ENCODE measurements at regions of chr2 and their contacts with region 1.

Region 1: DNA sequence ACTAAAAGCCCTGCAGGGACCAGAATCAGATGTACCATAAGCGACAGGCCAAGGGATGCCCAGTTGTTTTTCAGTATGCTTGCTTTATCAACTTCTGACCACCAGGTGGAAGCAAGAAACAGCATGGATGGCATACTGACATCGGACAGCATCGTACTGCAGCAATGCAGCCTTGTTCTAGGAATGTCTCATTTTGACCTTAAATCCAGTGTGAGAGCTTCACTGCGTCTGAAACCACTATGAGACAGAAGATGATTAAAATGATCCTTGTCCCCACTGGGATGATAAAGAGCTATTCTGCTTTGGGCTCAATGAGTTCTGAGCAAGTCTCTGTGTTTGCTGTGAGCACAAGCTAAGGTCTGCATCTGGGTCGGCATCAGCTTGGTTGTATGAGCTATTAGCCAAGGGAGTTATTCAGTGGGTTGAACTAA is 54.3 kb downstream of the CDK15 start:
- DNase-seq: peak in 1 of 2 donors; percentile 49
- ATAC-seq: peak; percentile 73 to 92 (median 88)
- H3K4me3 ChIP-seq: no peak overlapping the region
- H3K27ac ChIP-seq: no peak overlapping the region
- H3K4me1 ChIP-seq: peaks cover 0 to 6% (median 4%) of the 10 kb centered on the region in 9 donors
- H3K27me3 ChIP-seq: peaks cover 0 to 34% (median 17%) of the 10 kb centered on the region in 7 donors
- CTCF ChIP-seq: peak; percentile 50 to 89 (median 84)

Region 2: GRCh38 chr2:200635251-200635650 is 1225.4 kb before region 1 on chr2:
- intact Hi-C with region 1: no loop called
- DNase-seq: no peak
- ATAC-seq: peak in 1 of 8 donors; percentile 63
- H3K4me3 ChIP-seq: no peak overlapping the region
- H3K27ac ChIP-seq: peak overlapping the region in 1 of 10 donors; percentile 65
- H3K4me1 ChIP-seq: peaks cover 0 to 17% (median 0%) of the 10 kb centered on the region in 9 donors
- H3K27me3 ChIP-seq: no peaks in the 10 kb centered on the region
- CTCF ChIP-seq: no peak

Region 3: GRCh38 chr2:201680743-201681142 is 179.9 kb before region 1 on chr2:
- intact Hi-C with region 1: no loop called
- DNase-seq: no peak
- ATAC-seq: no peak
- H3K4me3 ChIP-seq: no peak overlapping the region
- H3K27ac ChIP-seq: no peak overlapping the region
- H3K4me1 ChIP-seq: no peaks in the 10 kb centered on the region
- H3K27me3 ChIP-seq: no peaks in the 10 kb centered on the region
- CTCF ChIP-seq: peak in 7 of 9 donors; percentile 18 to 48 (median 26)

Region 4: DNA sequence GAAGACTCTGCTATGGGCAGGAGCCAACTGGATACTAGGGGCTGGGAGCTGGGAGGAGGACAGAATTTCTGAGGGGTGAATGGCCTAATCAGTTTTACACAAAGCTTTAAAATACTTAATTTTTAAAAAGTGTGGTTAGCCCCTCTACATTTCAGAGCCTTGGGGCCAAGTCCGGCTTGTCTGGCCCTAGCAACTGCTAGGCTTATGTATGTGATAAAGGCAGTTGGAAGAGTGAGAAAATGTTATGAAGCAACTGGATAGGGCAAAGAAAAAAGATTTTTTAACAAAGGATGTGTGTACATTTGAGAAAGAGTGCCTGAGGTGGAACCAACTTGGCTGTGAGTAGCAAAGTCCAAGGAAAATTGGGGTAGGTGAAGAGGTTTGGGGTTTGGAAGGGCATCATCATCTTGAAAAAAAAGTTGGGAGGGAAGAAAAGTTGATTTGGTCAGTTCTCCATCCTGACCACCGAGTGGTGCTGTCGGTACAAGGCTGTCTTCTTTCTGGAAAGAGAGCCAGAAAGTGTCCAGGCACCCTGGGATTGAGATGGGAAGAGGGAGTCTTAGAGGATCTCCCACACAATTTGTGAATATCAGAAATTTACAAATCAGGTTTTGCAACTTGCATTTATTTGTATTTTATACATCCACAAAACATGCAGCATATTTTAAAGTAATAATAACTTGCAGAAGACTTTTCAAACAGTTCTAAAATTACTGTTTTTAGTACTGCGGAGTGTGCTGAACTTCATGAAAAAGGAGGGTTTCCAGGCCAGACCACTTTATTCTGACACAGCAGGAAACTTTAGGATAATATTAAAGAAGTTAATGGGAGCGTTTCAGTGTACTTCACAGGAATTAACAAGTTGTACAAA is 64.8 kb before region 1 on chr2:
- intact Hi-C with region 1: loop called in 1 of 10 experiments (anchors 10 kb)
- DNase-seq: peak in 1 of 2 donors; percentile 4
- ATAC-seq: peak in 5 of 8 donors; percentile 53 to 68 (median 62)
- H3K4me3 ChIP-seq: no peak overlapping the region
- H3K27ac ChIP-seq: no peak overlapping the region
- H3K4me1 ChIP-seq: no peaks in the 10 kb centered on the region
- H3K27me3 ChIP-seq: peaks cover 0 to 7% (median 0%) of the 10 kb centered on the region in 7 donors
- CTCF ChIP-seq: peak; percentile 40 to 73 (median 66)

Region 5: DNA sequence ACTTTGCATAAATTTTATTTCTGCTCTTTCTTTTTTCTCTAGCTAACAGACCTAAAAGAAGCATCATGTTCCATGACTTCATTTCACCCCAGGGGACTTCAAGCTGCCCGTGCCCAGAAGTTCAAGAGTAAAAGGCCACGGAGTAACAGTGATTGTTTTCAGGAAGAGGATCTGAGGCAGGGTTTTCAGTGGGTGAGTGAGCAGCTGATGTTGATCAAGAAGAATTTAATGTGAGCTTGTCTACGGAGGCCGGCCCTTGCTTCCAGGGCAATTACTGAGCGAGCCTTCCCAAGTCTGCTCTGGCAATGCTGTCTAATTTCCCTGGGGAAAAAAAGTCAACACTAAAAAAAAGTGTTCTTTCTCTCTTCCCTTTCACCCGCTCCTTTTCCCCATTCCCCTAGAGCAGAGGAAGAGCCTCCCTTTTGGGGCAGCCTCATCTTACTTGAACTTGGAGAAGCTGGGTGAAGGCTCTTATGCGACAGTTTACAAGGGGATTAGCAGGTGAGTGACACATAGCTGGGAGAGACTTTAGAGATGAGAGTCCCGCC is 53.1 kb before region 1 on chr2:
- intact Hi-C with region 1: loop called in 1 of 10 experiments (anchors 5 kb)
- DNase-seq: peak; percentile 24 to 47
- ATAC-seq: peak; percentile 78 to 95 (median 88)
- H3K4me3 ChIP-seq: no peak overlapping the region
- H3K27ac ChIP-seq: peak overlapping the region in 7 of 10 donors; percentile 17 to 58 (median 44)
- H3K4me1 ChIP-seq: peaks cover 0 to 20% (median 7%) of the 10 kb centered on the region in 9 donors
- H3K27me3 ChIP-seq: peaks cover 0 to 24% (median 4%) of the 10 kb centered on the region in 7 donors
- CTCF ChIP-seq: no peak

Region 6: GRCh38 chr2:201831469-201831868 is 29.2 kb before region 1 on chr2:
- intact Hi-C with region 1: no loop called
- DNase-seq: no peak
- ATAC-seq: no peak
- H3K4me3 ChIP-seq: no peak overlapping the region
- H3K27ac ChIP-seq: no peak overlapping the region
- H3K4me1 ChIP-seq: no peaks in the 10 kb centered on the region
- H3K27me3 ChIP-seq: peaks cover 0 to 4% (median 0%) of the 10 kb centered on the region in 7 donors
- CTCF ChIP-seq: no peak

Region 7: DNA sequence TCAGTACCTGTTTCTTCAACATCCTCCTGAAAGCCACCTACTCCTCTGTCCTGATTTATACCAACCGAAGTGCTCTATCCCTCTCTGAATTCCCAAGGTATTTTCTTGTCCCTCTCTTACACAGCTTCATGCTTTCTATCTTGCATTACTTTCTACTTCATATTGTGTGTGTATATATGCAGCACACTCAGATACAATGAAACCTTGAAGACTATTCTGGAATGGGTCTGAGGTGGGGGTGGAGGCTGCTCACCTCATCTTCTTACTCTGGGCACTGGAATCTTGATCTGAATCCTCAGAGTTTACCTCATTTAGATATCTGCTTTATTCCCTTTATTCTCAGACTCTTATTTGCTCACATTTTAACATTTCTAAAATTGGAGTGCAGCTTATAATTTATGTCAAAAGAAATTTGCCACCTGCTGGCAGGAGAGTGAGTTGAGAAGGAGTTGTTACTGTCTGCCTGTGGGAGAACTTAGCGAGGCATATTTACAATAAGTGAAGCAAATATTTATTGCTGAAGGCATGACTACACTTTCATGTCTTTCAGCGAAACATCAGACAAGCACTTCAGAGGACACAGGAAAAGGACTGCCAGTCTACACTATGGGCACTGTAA is 195.8 kb after region 1 on chr2:
- intact Hi-C with region 1: loop called in 3 of 10 experiments (anchors 5 kb)
- DNase-seq: no peak
- ATAC-seq: no peak
- H3K4me3 ChIP-seq: no peak overlapping the region
- H3K27ac ChIP-seq: no peak overlapping the region
- H3K4me1 ChIP-seq: peaks cover 0 to 11% (median 8%) of the 10 kb centered on the region in 9 donors
- H3K27me3 ChIP-seq: peaks cover 0 to 25% (median 6%) of the 10 kb centered on the region in 7 donors
- CTCF ChIP-seq: peak in 6 of 9 donors; percentile 16 to 48 (median 34)

Region 8: DNA sequence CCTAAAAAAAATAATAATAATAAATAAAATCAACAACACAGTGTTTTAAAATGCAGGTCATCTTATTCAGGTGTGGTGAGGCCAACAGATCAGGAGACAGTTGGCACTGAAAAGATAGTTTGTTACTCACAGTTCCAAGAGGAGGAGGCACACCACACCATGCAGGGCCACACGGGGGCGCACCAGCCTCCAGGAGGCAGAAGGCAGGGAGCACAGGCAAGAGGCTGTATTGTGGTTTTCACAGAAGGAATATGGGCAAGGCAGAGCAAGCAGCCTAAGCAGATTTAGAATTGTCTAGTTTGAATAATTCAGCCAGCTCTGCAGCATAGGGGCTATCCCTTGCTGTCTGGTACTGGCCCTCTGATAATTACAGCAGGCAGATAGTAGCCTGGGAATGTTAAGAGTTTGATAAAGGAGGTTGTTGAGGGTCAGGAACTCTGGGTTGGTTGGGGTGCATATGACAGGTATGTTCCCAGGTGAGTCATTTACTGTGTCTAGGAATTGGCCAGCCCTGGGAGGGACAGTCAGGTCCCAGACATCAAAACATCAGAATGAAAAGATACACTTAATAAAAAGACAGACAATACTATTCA is 243.7 kb after region 1 on chr2:
- intact Hi-C with region 1: no loop called
- DNase-seq: no peak
- ATAC-seq: no peak
- H3K4me3 ChIP-seq: no peak overlapping the region
- H3K27ac ChIP-seq: no peak overlapping the region
- H3K4me1 ChIP-seq: peaks cover 0 to 5% (median 0%) of the 10 kb centered on the region in 9 donors
- H3K27me3 ChIP-seq: peaks cover 0 to 7% (median 0%) of the 10 kb centered on the region in 7 donors
- CTCF ChIP-seq: peak in 6 of 9 donors; percentile 11 to 73 (median 34)

Region 9: GRCh38 chr2:202158796-202159195 is 298.1 kb after region 1 on chr2:
- intact Hi-C with region 1: loop called in 1 of 10 experiments (anchors 5 kb)
- DNase-seq: no peak
- ATAC-seq: peak in 5 of 8 donors; percentile 15 to 62 (median 47)
- H3K4me3 ChIP-seq: no peak overlapping the region
- H3K27ac ChIP-seq: no peak overlapping the region
- H3K4me1 ChIP-seq: peaks cover 0 to 14% (median 0%) of the 10 kb centered on the region in 9 donors
- H3K27me3 ChIP-seq: no peaks in the 10 kb centered on the region
- CTCF ChIP-seq: peak in 7 of 9 donors; percentile 27 to 51 (median 40)

Region 10: DNA sequence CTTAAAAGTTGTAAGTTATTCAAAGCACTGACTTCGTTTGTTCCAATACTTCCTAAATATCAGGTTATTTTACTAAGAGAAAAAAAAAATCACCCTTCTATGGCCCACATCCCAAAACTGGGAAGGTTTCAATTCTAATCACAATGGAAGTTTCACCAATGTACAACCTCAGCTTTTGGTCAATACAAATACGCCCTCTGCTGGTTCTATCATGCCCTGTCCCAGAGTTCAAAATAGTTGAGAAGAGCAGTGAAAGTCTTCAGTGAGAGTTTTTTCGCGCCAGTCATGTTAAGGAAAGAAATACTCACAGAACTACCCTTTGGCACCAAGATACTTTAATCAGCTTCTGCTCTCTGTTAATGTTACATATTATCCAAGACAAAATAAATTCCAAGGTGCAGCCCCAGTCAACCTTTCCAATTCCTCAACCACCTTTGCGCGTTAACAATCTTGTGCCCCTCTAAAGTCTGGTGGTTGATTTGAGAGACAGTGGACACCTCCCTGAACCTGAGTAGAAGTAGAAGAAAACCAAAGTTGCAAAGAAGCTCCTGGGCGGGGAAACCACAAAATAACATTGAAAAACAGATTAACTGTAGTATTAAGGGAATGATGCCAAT is 317.8 kb after region 1 on chr2:
- intact Hi-C with region 1: loop called (anchors 1 to 5 kb)
- DNase-seq: peak in 1 of 2 donors; percentile 55
- ATAC-seq: peak in 7 of 8 donors; percentile 75 to 90 (median 83)
- H3K4me3 ChIP-seq: no peak overlapping the region
- H3K27ac ChIP-seq: no peak overlapping the region
- H3K4me1 ChIP-seq: no peaks in the 10 kb centered on the region
- H3K27me3 ChIP-seq: no peaks in the 10 kb centered on the region
- CTCF ChIP-seq: peak; percentile 54 to 92 (median 88)